Panc1 (cell line): ENCODE measurements at regions of chr19 and their contacts with region 1.

Region 1: DNA sequence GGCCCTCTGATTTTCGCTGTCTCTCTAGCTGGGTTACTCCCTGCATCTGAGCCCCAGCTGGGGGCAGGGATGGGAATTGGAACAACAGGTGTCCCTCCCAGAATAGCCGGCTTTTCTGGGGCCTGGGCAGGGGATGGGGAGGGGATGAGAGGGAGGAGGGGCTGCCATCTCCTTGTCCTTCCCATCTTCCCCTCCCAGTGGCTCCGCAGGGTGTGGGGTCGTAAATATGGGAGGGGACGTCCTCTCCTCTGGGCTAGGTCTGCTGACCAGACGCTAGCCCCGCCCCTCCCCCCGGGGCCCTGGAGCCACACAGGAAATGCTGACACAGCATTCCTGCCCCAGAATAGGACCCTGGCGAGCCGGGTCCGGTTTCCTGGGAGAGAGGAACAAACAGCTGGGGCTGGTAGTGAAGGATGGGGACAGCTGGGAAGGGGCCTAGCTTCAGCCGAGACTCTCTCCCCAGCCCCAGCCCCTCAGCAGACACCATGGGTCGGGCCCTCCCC is 1.1 kb downstream of the RYR1 start:
- DNase-seq: no peak
- ATAC-seq: no peak
- H3K4me3 ChIP-seq: no peak overlapping the region
- H3K27ac ChIP-seq: no peak overlapping the region
- H3K4me1 ChIP-seq: no peaks in the 10 kb centered on the region
- H3K27me3 ChIP-seq: no peaks in the 10 kb centered on the region
- CTCF ChIP-seq: no peak

Region 2: GRCh38 chr19:38134540-38135149 is 300.0 kb before region 1 on chr19:
- CTCF ChIA-PET with region 1: no interaction called
- POLR2A ChIA-PET with region 1: no interaction called
- in situ Hi-C with region 1: no loop called
- intact Hi-C with region 1: no loop called
- DNase-seq: peak; percentile 25
- ATAC-seq: peak; percentile 38; the same call in 1 of the 2 replicates
- H3K4me3 ChIP-seq: no peak overlapping the region
- H3K27ac ChIP-seq: no peak overlapping the region
- H3K4me1 ChIP-seq: no peaks in the 10 kb centered on the region
- H3K27me3 ChIP-seq: no peaks in the 10 kb centered on the region
- CTCF ChIP-seq: peak; percentile 96

Region 3: GRCh38 chr19:38457690-38458405 is 23.2 kb after region 1 on chr19:
- CTCF ChIA-PET with region 1: no interaction called
- POLR2A ChIA-PET with region 1: interaction called, 13 read pairs
- in situ Hi-C with region 1: no loop called
- intact Hi-C with region 1: no loop called
- DNase-seq: no peak
- ATAC-seq: no peak
- H3K4me3 ChIP-seq: no peak overlapping the region
- H3K27ac ChIP-seq: no peak overlapping the region
- H3K4me1 ChIP-seq: no peaks in the 10 kb centered on the region
- H3K27me3 ChIP-seq: no peaks in the 10 kb centered on the region
- CTCF ChIP-seq: no peak

Region 4: DNA sequence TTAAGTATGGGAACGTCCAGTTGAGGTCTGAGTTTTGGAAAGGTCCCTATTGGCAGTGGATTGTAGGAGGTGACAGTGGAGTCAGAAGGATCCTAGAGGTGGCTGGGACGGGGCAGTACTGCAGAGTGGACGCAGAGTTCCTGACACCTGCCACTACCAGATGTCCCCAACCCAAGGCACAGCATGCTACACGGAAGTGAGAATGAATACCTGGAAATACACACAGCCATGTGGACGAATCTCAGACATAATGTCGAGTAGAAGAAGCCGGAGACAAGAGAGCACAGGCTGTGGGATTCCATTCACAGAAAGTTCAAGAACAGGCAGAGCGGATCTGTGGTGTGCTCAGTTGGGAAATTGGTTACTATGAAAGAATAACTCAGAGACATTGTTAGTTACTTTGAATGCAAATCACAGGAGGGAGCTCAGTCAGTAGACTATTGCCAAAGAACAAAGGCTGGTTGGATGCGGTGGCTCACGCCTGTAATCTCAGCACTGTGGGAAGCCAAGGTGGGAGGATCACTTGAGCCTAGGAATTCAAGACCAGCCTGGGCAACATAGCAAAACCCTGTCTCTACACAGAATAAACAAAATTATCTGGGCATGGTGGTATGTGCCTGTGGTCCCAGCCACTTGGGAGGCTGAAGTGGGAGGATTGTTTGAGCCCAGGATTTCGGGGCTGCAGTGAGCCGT is 36.3 kb after region 1 on chr19:
- CTCF ChIA-PET with region 1: interaction called, 11 read pairs
- POLR2A ChIA-PET with region 1: no interaction called
- in situ Hi-C with region 1: no loop called
- intact Hi-C with region 1: no loop called
- DNase-seq: no peak
- ATAC-seq: no peak; the same call in 1 of the 2 replicates
- H3K4me3 ChIP-seq: no peak overlapping the region
- H3K27ac ChIP-seq: no peak overlapping the region
- H3K4me1 ChIP-seq: no peaks in the 10 kb centered on the region
- H3K27me3 ChIP-seq: no peaks in the 10 kb centered on the region
- CTCF ChIP-seq: no peak